HepG2 (cell line): ENCODE measurements at regions of chr17 and their contacts with region 1.

Region 1: DNA sequence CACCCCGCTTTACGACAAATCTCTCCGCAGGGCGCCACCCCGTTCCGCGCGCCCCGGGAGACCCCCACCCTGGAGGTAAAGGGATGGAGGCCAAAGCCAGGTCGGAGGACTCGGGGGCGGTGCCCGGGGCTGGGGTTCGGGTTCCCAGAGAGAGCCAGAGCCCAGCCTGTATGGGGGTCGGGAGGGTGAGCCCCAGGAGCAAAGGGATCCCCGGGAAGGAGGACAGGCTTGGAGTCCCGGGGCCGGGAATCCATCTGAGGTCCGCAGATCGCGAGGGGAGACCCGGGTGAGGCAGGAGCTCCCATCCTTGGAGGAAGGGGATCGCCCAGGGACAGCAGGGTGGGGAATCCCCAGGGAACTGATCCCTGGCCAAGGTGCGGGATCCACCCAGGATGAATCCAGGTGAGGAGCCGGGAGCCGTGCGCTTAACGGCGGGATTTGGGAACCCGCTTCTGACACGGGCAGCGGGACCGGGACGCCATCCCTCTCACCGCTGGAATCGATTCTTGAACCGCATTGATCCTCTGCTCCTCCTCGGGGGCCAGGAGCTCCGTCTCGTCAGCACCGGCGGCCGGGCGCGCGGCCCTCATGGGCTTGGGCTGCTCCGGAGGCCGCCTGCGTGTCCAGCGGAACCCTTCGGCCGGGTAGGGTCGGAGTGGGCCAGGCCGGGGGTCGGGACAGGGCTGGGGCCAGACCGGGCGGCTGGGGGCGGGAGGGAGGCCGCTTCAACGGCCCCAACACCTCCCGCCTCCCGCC is at the start of gene MMD:
- DNase-seq: no peak
- ATAC-seq: peak; percentile 73
- H3K4me3 ChIP-seq: peak within 1 kb of the TSS; percentile 96 to 99 (median 98)
- H3K27ac ChIP-seq: peak within 1 kb of the TSS; percentile 87
- H3K4me1 ChIP-seq: peaks cover 60% of the 10 kb centered on the region
- H3K27me3 ChIP-seq: no peaks in the 10 kb centered on the region; a peak in 1 of 5 replicates
- CTCF ChIP-seq: peak; percentile 10; the same call in 1 of the 2 replicates
- EP300 ChIP-seq: no peak; a peak in 1 of 4 replicates
- POLR2A ChIP-seq: peak in 1 of 2 experiments; percentile 52; a peak in 2 of 4 replicates
- RAD21 ChIP-seq: no peak
- total RNA-seq, gene MMD: 121 and 137 TPM in 2 replicates

Region 2: DNA sequence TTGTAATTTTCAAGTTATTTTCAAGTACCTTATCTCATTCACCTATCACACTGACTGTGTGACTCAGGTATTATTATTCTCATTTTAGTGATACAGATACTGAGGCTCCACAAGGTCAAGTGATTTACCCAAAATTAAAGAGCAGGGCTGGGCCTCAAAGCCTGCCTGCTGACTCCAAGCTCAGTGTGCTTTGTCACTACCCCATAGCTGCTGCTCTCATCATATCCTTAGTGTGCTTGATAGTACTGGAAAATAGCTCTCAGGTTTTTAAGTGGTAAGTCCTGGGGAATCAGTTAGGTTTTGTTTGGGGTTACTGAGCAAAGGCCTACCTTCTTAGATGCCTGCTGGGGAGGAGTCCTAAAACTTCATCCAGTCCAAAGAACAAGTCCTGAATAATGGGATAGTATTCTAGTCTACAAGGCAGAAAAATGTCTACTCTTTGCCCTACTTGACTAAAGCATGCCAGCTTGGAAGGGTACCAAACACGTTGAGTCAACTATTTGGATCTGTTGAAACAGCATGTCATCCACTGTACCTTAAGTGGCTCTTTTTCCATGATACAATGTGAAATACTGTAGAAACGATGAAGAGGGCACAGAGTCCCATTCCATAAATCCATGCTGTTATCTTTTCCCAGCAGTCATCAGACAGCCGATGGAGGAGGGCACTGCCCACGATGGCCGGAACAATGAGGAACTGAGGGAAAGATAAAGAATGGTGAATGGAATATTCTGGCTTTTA is 10.5 kb before region 1 on chr17:
- CTCF ChIA-PET with region 1: no interaction called
- POLR2A ChIA-PET with region 1: interaction called, 127 read pairs
- in situ Hi-C with region 1: no loop called
- intact Hi-C with region 1: loop called (anchors 2 kb)
- DNase-seq: peak; percentile 55
- ATAC-seq: no peak
- H3K4me3 ChIP-seq: no peak overlapping the region
- H3K27ac ChIP-seq: peak overlapping the region; percentile 87
- H3K4me1 ChIP-seq: peaks cover 100% of the 10 kb centered on the region
- H3K27me3 ChIP-seq: no peaks in the 10 kb centered on the region
- CTCF ChIP-seq: no peak
- EP300 ChIP-seq: 0 out of 4 replicates have a peak, but pooled peaks of 1 of the 2 experiments have one; percentile 31
- POLR2A ChIP-seq: no peak; a peak in 1 of 4 replicates
- RAD21 ChIP-seq: no peak

Region 3: GRCh38 chr17:55444471-55445441 is 23.4 kb after region 1 on chr17:
- CTCF ChIA-PET with region 1: no interaction called
- POLR2A ChIA-PET with region 1: interaction called, 36 read pairs
- in situ Hi-C with region 1: no loop called
- intact Hi-C with region 1: loop called (anchors 1 kb)
- DNase-seq: peak; percentile 91
- ATAC-seq: peak; percentile 63
- H3K4me3 ChIP-seq: peak overlapping the region in 1 of 3 experiments; percentile 24; a peak in 1 of 6 replicates
- H3K27ac ChIP-seq: peak overlapping the region; percentile 88
- H3K4me1 ChIP-seq: peaks cover 94% of the 10 kb centered on the region
- H3K27me3 ChIP-seq: no peaks in the 10 kb centered on the region
- CTCF ChIP-seq: 0 out of 2 replicates have a peak, but pooled peaks have one; percentile 5
- EP300 ChIP-seq: peak in 1 of 2 experiments; percentile 64; a peak in 2 of 4 replicates
- POLR2A ChIP-seq: peak in 1 of 2 experiments; percentile 30; a peak in 3 of 4 replicates
- RAD21 ChIP-seq: no peak

Region 4: GRCh38 chr17:55458977-55459376 is 37.6 kb after region 1 on chr17:
- CTCF ChIA-PET with region 1: no interaction called
- POLR2A ChIA-PET with region 1: interaction called, 15 read pairs
- in situ Hi-C with region 1: no loop called
- intact Hi-C with region 1: loop called (anchors 5 kb)
- DNase-seq: no peak
- ATAC-seq: no peak
- H3K4me3 ChIP-seq: no peak overlapping the region
- H3K27ac ChIP-seq: no peak overlapping the region
- H3K4me1 ChIP-seq: peaks cover 42% of the 10 kb centered on the region
- H3K27me3 ChIP-seq: no peaks in the 10 kb centered on the region
- CTCF ChIP-seq: no peak
- EP300 ChIP-seq: no peak; a peak in 1 of 4 replicates
- POLR2A ChIP-seq: no peak
- RAD21 ChIP-seq: no peak

Region 5: DNA sequence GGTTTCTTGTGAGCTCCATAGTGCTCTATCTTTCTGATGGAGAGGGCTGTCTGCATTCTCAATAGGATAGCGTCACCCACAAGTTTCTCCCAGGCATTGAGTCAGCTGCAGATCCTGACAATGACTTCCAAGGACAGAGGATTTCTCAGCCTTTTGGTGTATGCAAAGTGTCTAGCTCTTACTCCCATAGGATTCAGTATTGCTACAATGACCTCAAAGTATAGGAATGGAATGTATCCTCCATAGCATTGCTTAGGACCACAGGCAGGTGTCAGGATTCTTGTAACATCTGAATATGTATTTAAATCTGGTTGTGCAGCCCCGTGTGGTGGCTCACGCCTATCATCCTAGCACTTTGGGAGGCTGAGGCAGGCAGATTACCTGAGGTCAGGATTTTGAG is 57.6 kb after region 1 on chr17:
- CTCF ChIA-PET with region 1: no interaction called
- POLR2A ChIA-PET with region 1: no interaction called
- in situ Hi-C with region 1: no loop called
- intact Hi-C with region 1: no loop called
- DNase-seq: peak; percentile 23
- ATAC-seq: peak; percentile 61
- H3K4me3 ChIP-seq: no peak overlapping the region
- H3K27ac ChIP-seq: no peak overlapping the region
- H3K4me1 ChIP-seq: peaks cover 7% of the 10 kb centered on the region
- H3K27me3 ChIP-seq: no peaks in the 10 kb centered on the region
- CTCF ChIP-seq: no peak
- EP300 ChIP-seq: no peak
- POLR2A ChIP-seq: no peak
- RAD21 ChIP-seq: no peak